ENCODE measurements at regions of chr6 and their contacts with region 1.

Region 1: GRCh38 chr6:72968704-72969103 is 256.6 kb downstream of the KHDC1L start:
- DNase-seq: no peak
- H3K4me3 ChIP-seq: no peak overlapping the region
- H3K27ac ChIP-seq: no peak overlapping the region
- H3K4me1 ChIP-seq: no peaks in the 10 kb centered on the region
- H3K27me3 ChIP-seq: no peaks in the 10 kb centered on the region
- CTCF ChIP-seq: no peak
- EP300 ChIP-seq: no peak
- POLR2A ChIP-seq: no peak

Region 2: DNA sequence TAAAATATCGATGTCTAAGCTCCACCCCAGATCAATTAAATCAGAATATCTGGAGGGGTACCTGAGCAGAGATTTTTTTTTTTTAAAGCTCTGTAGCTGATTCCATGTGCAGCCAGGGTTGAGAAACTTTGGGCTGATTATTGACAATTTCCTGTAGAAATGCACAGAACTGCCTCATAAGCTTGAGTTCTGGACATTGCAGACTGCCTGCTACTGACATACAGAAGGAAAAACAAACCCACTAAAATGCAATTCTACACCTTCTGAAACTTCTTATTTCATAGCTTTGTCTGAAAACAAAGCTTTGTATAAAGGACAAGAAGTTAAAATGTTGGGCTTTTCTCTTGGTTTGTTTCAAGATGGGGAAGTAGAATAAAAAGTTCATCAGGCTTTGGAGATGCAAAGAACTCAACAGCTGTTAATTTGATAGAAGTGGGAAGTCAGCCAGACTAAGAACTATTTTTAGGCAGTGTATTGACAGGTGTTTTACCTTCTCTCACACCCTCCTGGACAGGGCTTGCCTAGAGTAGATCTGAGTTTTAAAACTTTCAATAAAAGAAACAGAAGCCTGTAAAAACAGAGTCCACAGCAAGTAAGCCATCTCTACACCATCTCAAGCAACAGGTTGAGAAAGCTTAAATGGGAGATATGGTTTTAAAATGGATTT is 199.1 kb before region 1 on chr6:
- intact Hi-C with region 1: loop called (anchors 10 kb)
- DNase-seq: no peak
- H3K4me3 ChIP-seq: no peak overlapping the region
- H3K27ac ChIP-seq: no peak overlapping the region
- H3K4me1 ChIP-seq: no peaks in the 10 kb centered on the region
- H3K27me3 ChIP-seq: no peaks in the 10 kb centered on the region
- CTCF ChIP-seq: no peak
- EP300 ChIP-seq: no peak
- POLR2A ChIP-seq: no peak

Region 3: GRCh38 chr6:73085443-73085871 is 116.8 kb after region 1 on chr6:
- intact Hi-C with region 1: no loop called
- DNase-seq: no peak
- H3K4me3 ChIP-seq: no peak overlapping the region
- H3K27ac ChIP-seq: no peak overlapping the region
- H3K4me1 ChIP-seq: no peaks in the 10 kb centered on the region
- H3K27me3 ChIP-seq: no peaks in the 10 kb centered on the region
- CTCF ChIP-seq: no peak
- EP300 ChIP-seq: no peak
- POLR2A ChIP-seq: no peak

Measured in esophagus muscularis mucosa (tissue), 4 donors.